Pancreas (tissue), 10 donors: ENCODE measurements at regions of chr14 and their contacts with region 1.

Region 1: DNA sequence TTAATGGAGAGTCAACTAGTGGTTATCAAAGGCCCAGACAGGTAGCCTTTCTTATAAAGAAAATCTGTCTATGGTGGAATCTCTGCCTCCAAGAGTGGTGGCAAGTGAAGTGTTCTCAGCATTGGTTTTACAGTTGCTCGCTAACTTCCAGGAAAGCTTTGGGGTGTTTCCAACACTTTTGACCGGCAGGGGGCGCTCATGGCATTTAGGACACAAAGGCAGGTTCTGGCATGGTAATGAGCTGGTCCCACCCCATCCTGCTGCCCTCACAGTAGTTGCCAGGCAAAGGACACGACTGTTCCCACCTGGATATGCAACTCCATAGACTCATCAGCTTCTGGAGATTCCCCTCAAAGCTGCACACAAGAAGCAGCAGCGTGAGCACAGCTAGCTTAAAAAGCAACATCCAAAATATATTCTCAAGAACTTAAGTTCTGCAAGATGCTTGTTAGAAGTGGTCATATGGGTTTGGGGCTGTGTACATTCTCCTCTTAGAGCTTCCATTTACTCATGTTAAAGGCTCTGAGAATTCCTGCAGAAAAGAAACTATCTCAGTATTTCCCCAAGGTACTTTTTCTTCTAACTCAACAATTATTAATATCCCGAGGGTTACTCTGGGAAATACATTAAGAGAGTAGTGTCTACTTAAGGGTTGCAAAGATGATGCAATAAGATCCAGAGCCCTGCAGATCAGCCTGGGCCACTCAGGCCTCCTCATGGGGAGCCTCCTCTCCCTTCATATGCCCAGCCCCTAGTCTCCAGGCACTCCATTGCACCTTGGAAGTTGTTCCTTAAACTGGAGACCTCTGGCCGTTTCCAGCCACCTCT is 14.8 kb downstream of the PROX2 start:
- DNase-seq: peak; percentile 76 to 99 (median 90)
- ATAC-seq: peak; percentile 76 to 91 (median 88)
- H3K4me3 ChIP-seq: no peak overlapping the region
- H3K27ac ChIP-seq: no peak overlapping the region
- H3K4me1 ChIP-seq: no peaks in the 10 kb centered on the region
- H3K27me3 ChIP-seq: no peaks in the 10 kb centered on the region
- CTCF ChIP-seq: peak; percentile 77 to 85 (median 84)

Region 2: GRCh38 chr14:74161526-74162158 is 699.5 kb before region 1 on chr14:
- intact Hi-C with region 1: no loop called
- DNase-seq: no peak
- ATAC-seq: no peak
- H3K4me3 ChIP-seq: no peak overlapping the region
- H3K27ac ChIP-seq: no peak overlapping the region
- H3K4me1 ChIP-seq: no peaks in the 10 kb centered on the region
- H3K27me3 ChIP-seq: no peaks in the 10 kb centered on the region
- CTCF ChIP-seq: no peak

Region 3: DNA sequence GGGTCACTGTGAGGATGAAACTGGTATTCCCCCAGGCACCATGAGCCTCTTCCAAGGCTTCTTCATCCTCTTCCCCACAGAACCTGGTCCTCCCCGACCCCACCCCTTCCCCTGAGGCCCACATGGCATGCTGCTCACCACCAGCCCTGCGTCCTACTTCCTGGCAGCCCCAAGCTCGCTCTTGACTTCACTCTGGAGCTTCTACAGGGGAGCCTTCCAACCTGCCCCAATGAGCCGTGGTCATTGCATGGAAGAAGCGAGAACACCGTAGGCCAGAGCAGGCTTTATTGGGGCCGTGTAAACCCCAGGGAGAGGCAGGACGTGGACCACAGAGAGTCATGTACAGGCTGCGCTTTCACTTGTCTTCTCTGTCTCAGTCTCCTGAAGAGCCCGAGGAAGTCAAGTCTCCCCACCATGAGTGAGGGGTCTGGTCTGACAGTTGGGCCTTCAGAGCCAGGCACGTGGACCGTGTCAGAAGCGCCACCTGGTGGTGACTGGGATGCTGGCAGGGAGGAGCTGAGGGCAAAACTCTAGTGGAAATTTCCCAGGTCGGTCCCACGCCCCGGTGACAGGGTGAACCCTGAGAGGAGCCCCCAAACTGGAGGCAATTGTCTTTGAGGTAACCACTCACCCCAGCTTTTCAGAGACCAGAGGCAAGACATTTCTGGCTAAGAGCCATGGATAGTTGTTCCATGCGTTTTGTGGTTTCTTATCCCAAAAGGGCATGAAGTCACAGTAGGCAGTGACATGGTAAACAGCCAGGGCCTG is 44.4 kb after region 1 on chr14:
- intact Hi-C with region 1: loop called in 2 of 3 experiments (anchors 5 kb)
- DNase-seq: peak; percentile 47 to 92 (median 76)
- ATAC-seq: peak; percentile 65 to 81 (median 76)
- H3K4me3 ChIP-seq: no peak overlapping the region
- H3K27ac ChIP-seq: no peak overlapping the region
- H3K4me1 ChIP-seq: no peaks in the 10 kb centered on the region
- H3K27me3 ChIP-seq: no peaks in the 10 kb centered on the region
- CTCF ChIP-seq: peak; percentile 88 to 94 (median 90)